ENCODE measurements at regions of chr7 and their contacts with region 1.

Region 1: GRCh38 chr7:78924581-78924980 is 528.9 kb downstream of the MAGI2 start:
- DNase-seq: no peak
- ATAC-seq: no peak
- H3K4me3 ChIP-seq: no peak overlapping the region
- H3K27ac ChIP-seq: no peak overlapping the region
- H3K4me1 ChIP-seq: no peaks in the 10 kb centered on the region
- H3K27me3 ChIP-seq: no peaks in the 10 kb centered on the region
- CTCF ChIP-seq: peak in 7 of 12 donors; percentile 14 to 48 (median 32)
- POLR2A ChIP-seq: no peak

Region 2: GRCh38 chr7:77940647-77941046 is 983.9 kb before region 1 on chr7:
- intact Hi-C with region 1: loop called in 1 of 10 experiments (anchors 10 kb)
- DNase-seq: no peak
- ATAC-seq: no peak
- H3K4me3 ChIP-seq: no peak overlapping the region
- H3K27ac ChIP-seq: no peak overlapping the region
- H3K4me1 ChIP-seq: peaks cover 0 to 2% (median 0%) of the 10 kb centered on the region in 12 donors
- H3K27me3 ChIP-seq: no peaks in the 10 kb centered on the region
- CTCF ChIP-seq: peak; percentile 25 to 78 (median 61)
- POLR2A ChIP-seq: no peak

Region 3: GRCh38 chr7:78232806-78233205 is 691.8 kb before region 1 on chr7:
- intact Hi-C with region 1: loop called in 1 of 10 experiments (anchors 10 kb)
- DNase-seq: no peak
- ATAC-seq: no peak
- H3K4me3 ChIP-seq: no peak overlapping the region
- H3K27ac ChIP-seq: no peak overlapping the region
- H3K4me1 ChIP-seq: no peaks in the 10 kb centered on the region
- H3K27me3 ChIP-seq: no peaks in the 10 kb centered on the region
- CTCF ChIP-seq: no peak
- POLR2A ChIP-seq: no peak

Region 4: DNA sequence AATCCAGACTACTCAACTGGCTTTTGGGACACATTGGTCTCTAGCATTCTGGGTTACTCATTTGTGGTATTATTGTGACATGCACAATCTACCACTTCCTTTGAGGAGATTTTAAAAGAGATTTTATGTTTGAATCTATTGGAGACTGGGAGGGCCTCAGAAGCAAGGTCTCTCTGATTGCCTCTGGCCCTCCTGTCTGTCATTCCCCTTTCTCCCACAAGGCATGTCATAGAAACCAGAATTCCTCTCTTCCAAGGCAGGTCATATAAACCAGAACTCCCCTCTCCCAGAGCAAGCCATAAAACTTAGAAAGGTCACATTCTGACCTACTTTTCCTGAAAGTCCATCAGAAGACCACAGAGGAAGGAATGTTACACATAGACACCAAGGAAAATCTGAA is 348.3 kb before region 1 on chr7:
- intact Hi-C with region 1: no loop called
- DNase-seq: no peak
- ATAC-seq: no peak
- H3K4me3 ChIP-seq: no peak overlapping the region
- H3K27ac ChIP-seq: no peak overlapping the region
- H3K4me1 ChIP-seq: no peaks in the 10 kb centered on the region
- H3K27me3 ChIP-seq: no peaks in the 10 kb centered on the region
- CTCF ChIP-seq: no peak
- POLR2A ChIP-seq: no peak

Region 5: GRCh38 chr7:78873117-78873516 is 51.5 kb before region 1 on chr7:
- intact Hi-C with region 1: no loop called
- DNase-seq: no peak
- ATAC-seq: no peak
- H3K4me3 ChIP-seq: no peak overlapping the region
- H3K27ac ChIP-seq: no peak overlapping the region
- H3K4me1 ChIP-seq: no peaks in the 10 kb centered on the region
- H3K27me3 ChIP-seq: no peaks in the 10 kb centered on the region
- CTCF ChIP-seq: no peak
- POLR2A ChIP-seq: no peak

Measured in heart left ventricle (tissue), 16 donors.